Spleen (tissue), 13 donors: ENCODE measurements at regions of chr14 and their contacts with region 1.

Region 1: DNA sequence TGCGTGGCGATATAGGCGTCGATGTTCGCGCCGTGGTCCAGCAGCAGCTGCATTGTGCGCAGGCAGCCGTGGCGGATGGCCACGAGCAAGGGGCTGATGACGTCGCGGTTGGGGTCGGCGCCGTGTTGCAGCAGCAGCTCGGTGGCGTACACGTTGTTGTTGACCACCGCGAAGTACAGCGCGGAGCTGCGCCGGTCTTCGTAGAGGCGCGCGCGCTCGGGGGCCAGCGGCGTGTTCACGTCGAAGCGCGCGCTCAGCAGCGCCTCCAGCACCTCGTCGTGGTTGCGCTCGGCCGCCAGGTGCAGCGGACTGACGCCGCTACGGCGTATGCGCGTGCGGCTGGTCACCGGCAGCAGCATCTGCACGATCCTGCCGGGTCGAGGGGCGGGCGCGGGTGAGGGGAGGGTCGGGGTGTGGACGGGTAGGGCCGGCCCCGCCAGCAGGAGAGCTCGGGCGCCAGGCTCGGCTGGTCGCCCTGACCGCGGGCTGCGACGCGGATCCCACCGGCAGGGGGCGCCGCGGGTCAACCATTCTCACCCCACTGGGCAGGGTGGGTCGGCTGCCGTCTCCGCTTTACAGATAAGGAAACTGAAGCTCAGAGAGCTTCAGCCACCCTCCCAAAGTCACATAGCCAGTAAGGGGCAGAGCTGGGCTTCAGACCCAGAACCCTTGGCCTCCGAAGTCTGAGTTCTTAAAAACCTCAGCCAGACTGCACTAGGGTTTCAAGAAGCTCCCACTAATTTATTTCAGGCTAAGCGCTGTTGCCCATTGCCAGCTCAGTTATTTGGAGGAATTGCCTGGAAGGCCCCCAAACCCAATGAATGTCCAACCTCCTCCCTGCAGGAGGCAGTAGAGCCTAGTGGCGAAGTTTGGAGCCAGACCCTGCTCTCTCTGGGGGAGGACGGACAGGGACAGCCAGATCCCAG is 12.4 kb downstream of the FAM181A start:
- DNase-seq: peak; percentile 97
- H3K4me3 ChIP-seq: peak overlapping the region; percentile 26 to 71 (median 41)
- H3K27ac ChIP-seq: peak overlapping the region in 2 of 8 donors; percentile 3 to 45
- H3K4me1 ChIP-seq: peaks cover 0 to 22% (median 15%) of the 10 kb centered on the region in 6 donors
- H3K27me3 ChIP-seq: peaks cover 0 to 29% (median 10%) of the 10 kb centered on the region in 7 donors
- CTCF ChIP-seq: peak; percentile 79 to 98 (median 94)
- POLR2A ChIP-seq: no peak

Region 2: DNA sequence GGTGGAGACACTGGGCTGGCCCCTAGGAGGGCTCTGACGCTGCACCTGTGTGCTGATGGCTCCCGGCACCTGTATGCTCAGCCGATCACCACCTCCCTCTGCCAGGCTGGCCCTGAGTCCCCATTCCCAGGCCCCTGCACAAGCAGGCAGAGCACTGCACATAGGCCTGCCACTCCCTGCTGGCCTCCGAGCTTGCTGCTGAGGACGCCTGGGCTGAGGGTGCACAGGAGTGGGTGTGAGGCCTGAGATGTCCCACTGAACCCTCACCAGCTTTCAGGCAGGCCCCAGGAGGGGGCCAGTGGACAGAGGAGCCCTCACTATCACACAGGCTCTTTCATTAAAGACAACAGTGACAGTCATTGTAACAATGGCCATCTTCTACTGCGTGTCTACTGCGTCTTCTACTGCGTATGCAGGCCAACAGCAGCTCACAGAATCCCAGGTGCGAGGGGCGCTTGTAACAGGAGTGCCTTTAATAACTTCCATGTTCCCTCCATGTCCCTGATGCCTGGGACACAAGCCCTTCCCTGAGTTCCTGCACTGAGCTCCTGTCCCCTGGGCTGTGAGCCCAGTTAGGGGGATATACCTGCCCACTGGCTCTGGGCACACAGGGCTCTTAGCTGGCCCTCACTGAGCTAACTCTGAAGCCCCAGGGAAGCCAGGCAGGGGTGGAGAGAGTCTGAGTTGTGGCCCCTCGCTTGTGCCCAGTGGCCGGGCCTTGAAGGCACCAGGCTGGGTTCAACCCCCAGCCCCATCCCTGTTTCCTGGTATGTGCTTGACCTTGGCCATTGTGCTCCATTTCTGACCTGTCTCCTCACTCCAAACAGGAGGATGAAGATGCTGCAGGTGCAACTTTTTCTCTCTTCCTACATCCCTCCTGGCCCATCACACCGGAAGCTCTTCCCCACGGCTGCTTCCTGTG is 222.6 kb before region 1 on chr14:
- intact Hi-C with region 1: no loop called
- DNase-seq: peak; percentile 67
- H3K4me3 ChIP-seq: no peak overlapping the region
- H3K27ac ChIP-seq: no peak overlapping the region
- H3K4me1 ChIP-seq: no peaks in the 10 kb centered on the region
- H3K27me3 ChIP-seq: peaks cover 0 to 23% (median 0%) of the 10 kb centered on the region in 7 donors
- CTCF ChIP-seq: no peak
- POLR2A ChIP-seq: no peak

Region 3: GRCh38 chr14:94001501-94002396 is 62.2 kb after region 1 on chr14:
- intact Hi-C with region 1: loop called (anchors 2 kb)
- DNase-seq: peak; percentile 89
- H3K4me3 ChIP-seq: peak overlapping the region in 1 of 8 donors; percentile 17
- H3K27ac ChIP-seq: no peak overlapping the region
- H3K4me1 ChIP-seq: peaks cover 0 to 11% (median 8%) of the 10 kb centered on the region in 6 donors
- H3K27me3 ChIP-seq: peaks cover 0 to 67% (median 11%) of the 10 kb centered on the region in 7 donors
- CTCF ChIP-seq: peak; percentile 89 to 96 (median 94)
- POLR2A ChIP-seq: no peak

Region 4: DNA sequence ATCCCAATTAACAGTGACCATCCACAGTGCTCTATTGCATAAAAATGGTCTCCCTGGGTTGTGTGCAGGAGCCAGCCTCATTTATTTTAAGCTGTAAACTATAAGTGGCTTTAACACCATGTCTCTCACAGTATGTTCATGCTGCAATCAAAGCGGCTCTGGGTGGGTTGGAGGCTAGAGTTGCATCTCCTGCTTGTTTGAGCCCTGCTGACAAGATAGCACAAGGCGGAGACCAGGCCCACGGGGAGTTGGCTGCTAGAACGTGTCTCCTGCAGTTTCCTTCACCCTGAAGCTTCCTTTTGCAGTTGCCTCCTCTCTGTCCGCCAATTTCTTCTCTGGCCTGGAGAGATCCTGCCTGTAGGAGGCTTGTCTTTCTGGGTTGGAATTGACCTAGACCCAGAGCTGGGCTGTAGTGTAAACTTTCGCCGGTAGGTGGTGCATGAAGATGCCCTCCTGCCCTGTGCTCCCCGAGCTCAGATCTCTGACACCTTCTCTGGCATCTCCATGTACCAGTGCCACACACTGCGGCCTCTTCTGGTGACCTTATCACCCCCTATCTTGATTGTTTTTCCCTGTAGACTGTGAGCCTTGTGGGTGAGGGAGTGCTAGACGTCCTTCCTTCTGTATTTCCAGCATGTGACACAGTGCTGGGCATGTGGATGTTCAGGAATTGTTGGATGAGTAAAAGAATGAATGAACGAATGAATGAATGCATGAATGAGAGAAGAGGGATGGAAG is 96.9 kb after region 1 on chr14:
- intact Hi-C with region 1: no loop called
- DNase-seq: peak; percentile 85
- H3K4me3 ChIP-seq: no peak overlapping the region
- H3K27ac ChIP-seq: no peak overlapping the region
- H3K4me1 ChIP-seq: peaks cover 0 to 20% (median 8%) of the 10 kb centered on the region in 6 donors
- H3K27me3 ChIP-seq: no peaks in the 10 kb centered on the region
- CTCF ChIP-seq: peak; percentile 77 to 91 (median 87)
- POLR2A ChIP-seq: no peak

Region 5: DNA sequence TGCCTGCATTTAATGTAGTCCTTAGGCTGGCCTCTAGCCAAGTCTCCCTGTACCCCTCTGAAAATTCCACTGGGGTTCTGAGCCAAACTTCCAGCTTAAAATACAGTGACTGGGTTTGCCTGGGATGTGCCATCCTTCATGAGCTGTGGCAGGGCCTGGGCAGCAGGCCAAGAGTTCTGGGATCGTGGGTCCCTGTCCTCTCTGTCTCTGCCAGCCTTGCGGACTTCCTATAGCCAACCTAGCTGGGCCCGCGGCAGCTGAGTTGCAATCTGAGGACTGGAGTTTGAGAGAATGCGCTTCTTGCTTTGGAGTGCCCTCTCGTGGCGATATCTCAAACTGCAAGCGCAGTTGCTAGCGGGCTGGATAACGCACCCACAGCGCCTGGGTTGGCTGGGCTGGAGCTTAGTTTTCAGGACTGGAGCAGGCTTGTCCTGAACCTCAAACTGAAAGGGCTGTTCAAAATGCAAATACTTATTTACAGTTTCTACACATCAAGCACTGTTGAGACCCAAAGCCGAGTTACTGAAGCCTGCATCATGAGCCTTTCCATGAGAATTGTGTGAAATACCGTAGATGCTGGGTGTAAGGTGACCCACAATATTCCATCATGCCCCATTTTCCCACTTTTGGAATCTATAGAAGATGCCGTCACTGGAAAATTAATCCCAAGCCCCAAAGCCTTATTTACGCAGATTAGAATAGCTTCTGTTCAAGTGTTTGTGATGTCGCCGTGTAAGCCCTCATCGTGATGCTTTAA is 197.2 kb after region 1 on chr14:
- intact Hi-C with region 1: loop called (anchors 5 kb)
- DNase-seq: peak; percentile 93
- H3K4me3 ChIP-seq: no peak overlapping the region
- H3K27ac ChIP-seq: no peak overlapping the region
- H3K4me1 ChIP-seq: peaks cover 0 to 13% (median 5%) of the 10 kb centered on the region in 6 donors
- H3K27me3 ChIP-seq: peaks cover 0 to 10% (median 0%) of the 10 kb centered on the region in 7 donors
- CTCF ChIP-seq: peak; percentile 87 to 99 (median 97)
- POLR2A ChIP-seq: no peak